Endothelial cell of umbilical vein (primary cell): ENCODE measurements at regions of chr11 and their contacts with region 1.

Region 1: GRCh38 chr11:41461057-41461681 is 1.7 kb upstream of the LRRC4C start:
- DNase-seq: peak; percentile 16
- H3K4me3 ChIP-seq: no peak overlapping the region
- H3K27ac ChIP-seq: no peak overlapping the region
- H3K4me1 ChIP-seq: no peaks in the 10 kb centered on the region
- H3K27me3 ChIP-seq: peaks cover 0 to 2% of the 10 kb centered on the region in 2 experiments
- CTCF ChIP-seq: peak; percentile 16 to 37
- POLR2A ChIP-seq: no peak

Region 2: GRCh38 chr11:41446107-41446506 is 15.1 kb before region 1 on chr11:
- CTCF ChIA-PET with region 1: no interaction called
- POLR2A ChIA-PET with region 1: no interaction called
- dilution Hi-C with region 1: no loop called
- intact Hi-C with region 1: no loop called
- DNase-seq: no peak
- H3K4me3 ChIP-seq: no peak overlapping the region
- H3K27ac ChIP-seq: no peak overlapping the region
- H3K4me1 ChIP-seq: no peaks in the 10 kb centered on the region
- H3K27me3 ChIP-seq: no peaks in the 10 kb centered on the region
- CTCF ChIP-seq: no peak
- POLR2A ChIP-seq: no peak

Region 3: DNA sequence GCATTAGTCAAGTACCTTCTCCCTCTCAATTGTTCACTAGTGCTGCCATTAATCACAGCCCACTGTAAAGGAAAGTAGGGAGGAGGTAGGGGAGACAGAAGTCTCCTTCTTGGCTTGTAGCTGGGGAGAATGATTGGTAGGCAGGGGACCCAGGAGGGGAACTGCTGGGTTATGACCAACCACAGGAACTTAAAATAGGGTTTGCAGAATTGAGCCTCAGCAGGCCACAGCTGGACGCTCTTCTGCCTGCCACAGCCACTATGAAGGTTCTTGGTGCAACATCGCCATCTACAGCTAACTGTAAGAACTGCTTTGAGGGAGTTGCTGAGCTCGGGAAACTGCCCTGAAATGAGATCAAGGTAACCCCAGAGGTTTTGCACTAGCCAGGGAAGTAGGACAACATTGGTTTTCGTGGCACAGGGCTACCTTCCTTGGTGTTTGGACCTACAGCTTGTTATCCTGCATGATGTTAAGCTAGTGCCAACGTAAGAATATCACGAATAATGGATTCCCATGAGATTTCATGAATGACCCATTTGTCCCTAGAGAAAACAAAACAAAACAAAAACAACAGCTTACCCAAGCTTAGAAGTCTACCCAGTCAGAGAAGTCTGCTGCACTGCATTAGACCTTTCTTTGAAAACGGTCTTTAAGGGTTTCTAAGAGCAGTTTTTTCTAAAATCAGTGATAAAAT is 1063.5 kb after region 1 on chr11:
- CTCF ChIA-PET with region 1: interaction called, 11 read pairs
- POLR2A ChIA-PET with region 1: no interaction called
- dilution Hi-C with region 1: no loop called
- intact Hi-C with region 1: loop called (anchors 1 kb)
- DNase-seq: peak; percentile 72
- H3K4me3 ChIP-seq: no peak overlapping the region
- H3K27ac ChIP-seq: no peak overlapping the region
- H3K4me1 ChIP-seq: no peaks in the 10 kb centered on the region
- H3K27me3 ChIP-seq: no peaks in the 10 kb centered on the region
- CTCF ChIP-seq: peak; percentile 63 to 73
- POLR2A ChIP-seq: no peak

Region 4: GRCh38 chr11:43282607-43283440 is 1821.7 kb after region 1 on chr11:
- CTCF ChIA-PET with region 1: interaction called, 26 read pairs
- POLR2A ChIA-PET with region 1: no interaction called
- dilution Hi-C with region 1: no loop called
- intact Hi-C with region 1: no loop called
- DNase-seq: peak; percentile 50
- H3K4me3 ChIP-seq: no peak overlapping the region
- H3K27ac ChIP-seq: no peak overlapping the region
- H3K4me1 ChIP-seq: no peaks in the 10 kb centered on the region
- H3K27me3 ChIP-seq: peaks cover 0 to 2% of the 10 kb centered on the region in 2 experiments
- CTCF ChIP-seq: peak; percentile 82 to 84
- POLR2A ChIP-seq: no peak